Activated CD8-positive, alpha-beta memory T cell treated with anti-CD3 and anti-CD28 coated beads, Interleukin-2, amount 10 ng/mL, durations not matched to agents 7 days and 5 days (primary cell): ENCODE measurements at regions of chr20 and their contacts with region 1.

Region 1: DNA sequence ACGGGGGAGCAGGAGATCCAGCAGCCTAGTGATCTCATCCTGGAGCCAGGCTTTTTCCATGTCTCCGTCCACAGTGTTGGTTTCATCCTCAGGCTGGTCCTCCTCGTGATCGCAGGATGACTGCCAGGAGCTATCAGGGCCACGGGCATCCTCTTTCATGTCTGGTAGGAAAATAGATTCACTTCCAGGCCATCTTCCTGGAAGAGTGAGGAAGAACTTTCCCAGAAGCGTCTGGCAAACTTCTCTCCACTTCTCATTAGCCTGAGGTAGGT is 15.3 kb upstream of the SLC9A8 start:
- DNase-seq: no peak
- ATAC-seq: no peak
- H3K4me3 Mint-ChIP-seq: no peak overlapping the region
- H3K27ac Mint-ChIP-seq: no peak overlapping the region
- H3K4me1 Mint-ChIP-seq: peaks cover 36% of the 10 kb centered on the region
- H3K27me3 Mint-ChIP-seq: peaks cover 5% of the 10 kb centered on the region

Region 2: GRCh38 chr20:49812463-49813304 is 15.4 kb after region 1 on chr20 and contains the start of gene SLC9A8:
- CTCF ChIA-PET with region 1: interaction called, 11 read pairs
- DNase-seq: peak; percentile 89
- ATAC-seq: peak; percentile 95
- H3K4me3 Mint-ChIP-seq: peak within 1 kb of the TSS; percentile 95
- H3K27ac Mint-ChIP-seq: peak within 1 kb of the TSS; percentile 94
- H3K4me1 Mint-ChIP-seq: peaks cover 30% of the 10 kb centered on the region
- H3K27me3 Mint-ChIP-seq: no peaks in the 10 kb centered on the region
- total RNA-seq, gene SLC9A8: 16.3 to 24.9 TPM

Region 3: GRCh38 chr20:49853640-49854039 is 56.4 kb after region 1 on chr20:
- CTCF ChIA-PET with region 1: no interaction called
- DNase-seq: no peak
- ATAC-seq: no peak
- H3K4me3 Mint-ChIP-seq: no peak overlapping the region
- H3K27ac Mint-ChIP-seq: no peak overlapping the region
- H3K4me1 Mint-ChIP-seq: peaks cover 8% of the 10 kb centered on the region
- H3K27me3 Mint-ChIP-seq: no peaks in the 10 kb centered on the region

Region 4: DNA sequence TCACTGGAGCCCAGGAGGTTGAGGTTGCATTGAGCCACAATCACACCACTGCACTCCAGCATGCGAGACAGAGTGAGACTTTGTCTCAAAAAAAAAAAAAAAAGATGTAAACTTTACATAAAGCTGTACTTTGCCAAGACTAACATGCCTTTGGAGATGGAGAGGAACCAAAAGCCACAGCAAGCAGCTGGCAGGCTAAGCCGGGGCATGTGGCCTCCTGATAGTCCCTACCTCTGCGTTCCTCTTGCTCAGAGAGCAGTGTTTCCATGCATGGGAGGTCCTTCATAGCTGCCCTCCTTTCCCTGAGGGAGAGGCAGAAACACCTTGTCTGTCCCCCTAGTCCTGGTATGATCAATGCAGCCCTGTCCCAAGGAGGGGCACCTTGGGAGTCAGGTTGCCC is 82.9 kb after region 1 on chr20:
- CTCF ChIA-PET with region 1: no interaction called
- DNase-seq: no peak
- ATAC-seq: no peak
- H3K4me3 Mint-ChIP-seq: no peak overlapping the region
- H3K27ac Mint-ChIP-seq: no peak overlapping the region
- H3K4me1 Mint-ChIP-seq: peaks cover 4% of the 10 kb centered on the region
- H3K27me3 Mint-ChIP-seq: no peaks in the 10 kb centered on the region